ENCODE measurements at regions of chr6 and their contacts with region 1.

Region 1: DNA sequence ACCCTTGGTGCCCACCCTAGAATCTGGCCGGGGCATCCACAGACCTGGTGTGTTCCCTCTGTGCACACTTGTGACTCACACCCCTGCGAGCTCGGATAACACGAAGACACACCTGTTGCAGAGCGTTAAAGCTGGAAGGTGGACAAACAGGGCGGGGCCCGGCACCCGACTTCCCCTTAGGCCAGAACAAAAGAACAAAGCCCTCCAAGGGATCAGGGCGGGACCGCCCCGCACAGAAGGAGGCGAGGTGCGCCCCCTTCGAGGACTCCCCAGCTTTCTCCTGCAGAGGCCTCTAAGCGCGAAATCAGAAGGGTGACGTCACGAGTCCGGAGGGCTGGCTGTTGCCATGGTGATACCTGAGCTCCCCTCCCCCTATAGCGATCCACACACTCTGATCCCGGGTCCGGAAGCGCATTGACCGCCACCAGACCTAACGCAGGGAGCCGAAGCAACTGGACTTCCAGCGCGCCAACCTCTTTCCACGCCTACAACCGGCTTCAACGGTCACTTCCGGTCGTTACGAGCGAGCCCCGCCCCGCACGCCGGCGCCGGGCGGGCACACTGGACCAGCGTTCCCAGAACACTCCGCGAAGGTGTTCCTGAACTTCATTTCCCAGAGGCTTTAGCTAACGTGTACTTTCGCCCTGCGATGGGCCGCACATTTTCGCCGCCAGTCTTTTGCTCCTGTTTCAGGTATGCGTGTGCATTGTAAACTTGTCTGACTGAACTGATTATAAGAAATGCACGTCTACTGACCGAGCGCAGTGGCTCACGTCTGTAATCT is at the start of gene ZNF184:
- DNase-seq: peak; percentile 71 to 94 (median 84)
- ATAC-seq: peak; percentile 63
- H3K4me3 ChIP-seq: peak within 1 kb of the TSS; percentile 80 to 90
- H3K4me3 Mint-ChIP-seq: peak within 1 kb of the TSS; percentile 96
- H3K27ac ChIP-seq: peak within 1 kb of the TSS; percentile 94 to 96
- H3K27ac Mint-ChIP-seq: peak within 1 kb of the TSS; percentile 96
- H3K4me1 ChIP-seq: peaks cover 26% of the 10 kb centered on the region
- H3K4me1 Mint-ChIP-seq: peaks cover 48% of the 10 kb centered on the region
- H3K27me3 ChIP-seq: no peaks in the 10 kb centered on the region
- H3K27me3 Mint-ChIP-seq: no peaks in the 10 kb centered on the region
- CTCF ChIP-seq: no peak
- total RNA-seq, gene ZNF184: 31.8 to 32.9 TPM

Region 2: GRCh38 chr6:26568601-26569432 is 904.0 kb before region 1 on chr6:
- CTCF ChIA-PET with region 1: no interaction called
- POLR2A ChIA-PET with region 1: no interaction called
- intact Hi-C with region 1: loop called in 1 of 2 experiments (anchors 10 kb)
- DNase-seq: peak; percentile 95 to 100 (median 99)
- ATAC-seq: peak; percentile 73
- H3K4me3 ChIP-seq: peak overlapping the region; percentile 74 to 90
- H3K4me3 Mint-ChIP-seq: peak overlapping the region; percentile 92
- H3K27ac ChIP-seq: peak overlapping the region; percentile 79 to 80
- H3K27ac Mint-ChIP-seq: peak overlapping the region; percentile 97
- H3K4me1 ChIP-seq: peaks cover 15% of the 10 kb centered on the region
- H3K4me1 Mint-ChIP-seq: peaks cover 20% of the 10 kb centered on the region
- H3K27me3 ChIP-seq: no peaks in the 10 kb centered on the region
- H3K27me3 Mint-ChIP-seq: peaks cover 2% of the 10 kb centered on the region
- CTCF ChIP-seq: peak; percentile 34

Region 3: DNA sequence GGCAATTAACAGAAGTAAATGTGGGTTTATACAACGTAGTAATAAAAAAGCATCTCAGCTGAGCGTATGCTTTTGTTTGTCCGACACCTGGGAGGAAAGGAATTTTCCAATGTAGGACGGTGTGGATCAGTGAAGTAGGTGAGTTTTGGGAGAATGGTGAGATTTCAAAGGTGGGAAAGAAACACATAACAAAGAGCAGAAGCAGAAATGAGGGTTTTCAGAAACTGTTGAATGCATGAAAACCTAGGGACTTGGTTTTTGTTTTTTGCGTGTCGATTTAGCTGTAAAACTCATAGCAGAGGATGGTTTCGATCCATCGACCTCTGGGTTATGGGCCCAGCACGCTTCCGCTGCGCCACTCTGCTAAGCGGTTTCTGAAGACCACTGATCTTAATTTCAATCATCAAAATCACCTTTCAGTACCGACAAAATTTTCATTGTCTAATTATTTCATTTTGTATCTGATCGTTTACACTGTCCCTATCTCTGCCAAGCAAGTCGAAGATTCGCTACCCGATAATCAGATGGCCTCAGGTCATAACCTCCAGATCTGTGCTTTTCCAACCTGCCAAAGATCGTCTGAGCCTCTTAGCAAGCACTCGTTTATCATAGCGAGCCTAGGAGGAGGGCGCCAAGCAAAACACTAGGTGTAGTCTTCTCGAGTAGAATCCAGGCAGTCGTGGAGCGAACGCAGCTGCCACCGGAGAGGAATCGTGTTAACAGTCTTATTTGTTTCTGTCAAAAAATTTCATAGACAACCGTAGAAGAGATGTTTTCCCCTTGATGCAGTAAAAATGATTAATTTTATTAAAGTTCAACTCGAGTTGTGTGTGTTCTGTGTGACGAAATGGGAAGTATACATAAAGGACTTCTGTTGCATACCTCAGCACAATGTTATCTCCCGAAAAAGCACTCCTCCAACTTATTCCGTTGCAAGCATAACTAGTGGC is 139.8 kb before region 1 on chr6:
- CTCF ChIA-PET with region 1: no interaction called
- POLR2A ChIA-PET with region 1: no interaction called
- intact Hi-C with region 1: loop called (anchors 2 kb)
- DNase-seq: peak in 8 of 9 experiments; percentile 12 to 78 (median 60)
- ATAC-seq: peak; percentile 86
- H3K4me3 ChIP-seq: peak overlapping the region; percentile 53
- H3K4me3 Mint-ChIP-seq: peak overlapping the region; percentile 87
- H3K27ac ChIP-seq: no peak overlapping the region
- H3K27ac Mint-ChIP-seq: peak overlapping the region; percentile 82
- H3K4me1 ChIP-seq: no peaks in the 10 kb centered on the region
- H3K4me1 Mint-ChIP-seq: peaks cover 15% of the 10 kb centered on the region
- H3K27me3 ChIP-seq: peaks cover 0 to 4% of the 10 kb centered on the region in 2 experiments
- H3K27me3 Mint-ChIP-seq: peaks cover 21% of the 10 kb centered on the region
- CTCF ChIP-seq: no peak

Region 4: DNA sequence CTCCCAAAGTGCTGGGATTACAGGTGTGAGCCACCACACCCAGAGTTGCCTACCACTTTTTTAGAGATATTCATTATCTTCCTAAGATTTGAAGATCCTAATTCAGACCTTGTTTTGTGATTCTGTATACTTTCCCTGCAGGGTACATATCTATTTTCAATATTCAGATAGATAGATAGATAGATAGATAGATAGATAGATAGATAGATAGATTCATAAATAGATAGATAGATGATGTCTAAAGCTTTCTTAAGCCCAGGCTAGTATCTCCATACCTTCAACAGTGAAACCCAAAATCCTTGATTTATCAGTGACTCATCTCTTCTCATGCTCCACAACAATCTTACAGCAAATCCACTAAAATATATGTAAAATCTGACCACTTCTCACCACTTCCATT is 53.4 kb before region 1 on chr6:
- CTCF ChIA-PET with region 1: no interaction called
- POLR2A ChIA-PET with region 1: no interaction called
- intact Hi-C with region 1: no loop called
- DNase-seq: no peak
- ATAC-seq: no peak
- H3K4me3 ChIP-seq: no peak overlapping the region
- H3K4me3 Mint-ChIP-seq: no peak overlapping the region
- H3K27ac ChIP-seq: no peak overlapping the region
- H3K27ac Mint-ChIP-seq: no peak overlapping the region
- H3K4me1 ChIP-seq: no peaks in the 10 kb centered on the region
- H3K4me1 Mint-ChIP-seq: no peaks in the 10 kb centered on the region
- H3K27me3 ChIP-seq: no peaks in the 10 kb centered on the region
- H3K27me3 Mint-ChIP-seq: peaks cover 37% of the 10 kb centered on the region
- CTCF ChIP-seq: no peak

Region 5: DNA sequence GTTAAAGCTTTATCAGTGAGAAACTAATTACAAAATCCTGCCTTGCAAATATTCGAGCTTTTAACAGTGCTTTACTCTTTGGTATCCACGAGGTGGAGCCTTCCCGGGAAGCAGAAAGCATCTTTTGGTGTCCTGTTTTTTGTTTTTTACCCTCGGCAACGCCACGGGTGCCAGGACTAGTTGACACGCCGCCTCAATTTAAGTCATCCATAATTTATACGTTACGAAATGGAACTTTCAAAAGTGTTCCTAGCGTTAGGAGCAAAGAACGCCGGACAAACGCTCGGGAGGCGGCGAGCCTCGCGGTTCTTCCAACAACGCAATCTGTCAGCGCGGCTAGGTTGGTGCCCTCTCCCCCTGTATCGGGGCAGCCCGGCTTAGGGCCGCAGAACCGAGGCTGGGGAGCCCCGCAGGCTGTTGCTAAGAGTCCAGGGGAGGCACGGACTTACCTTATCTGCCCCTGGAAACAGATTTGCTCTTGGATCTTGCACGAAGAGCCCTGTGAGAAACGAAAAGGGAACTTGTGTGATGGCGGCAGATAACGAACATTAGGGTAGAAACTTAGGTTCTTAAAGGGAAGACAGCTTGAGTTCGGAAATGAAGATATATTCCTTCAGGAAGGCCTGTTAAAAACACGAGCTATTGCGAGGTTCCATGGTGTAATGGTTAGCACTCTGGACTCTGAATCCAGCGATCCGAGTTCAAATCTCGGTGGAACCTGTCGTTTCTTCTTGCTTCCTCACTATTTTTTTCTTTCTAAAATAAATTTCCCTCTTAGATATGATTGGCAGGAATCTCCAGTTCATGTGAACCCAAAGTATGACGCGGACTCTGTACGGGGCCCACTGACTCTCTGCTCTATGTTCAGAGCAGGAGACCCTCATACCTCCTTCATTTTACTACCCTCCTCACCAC is 46.3 kb after region 1 on chr6:
- CTCF ChIA-PET with region 1: no interaction called
- POLR2A ChIA-PET with region 1: no interaction called
- intact Hi-C with region 1: loop called (anchors 1 to 2 kb)
- DNase-seq: peak; percentile 29 to 88 (median 61)
- ATAC-seq: peak; percentile 78
- H3K4me3 ChIP-seq: peak overlapping the region; percentile 74 to 88
- H3K4me3 Mint-ChIP-seq: peak overlapping the region; percentile 83
- H3K27ac ChIP-seq: peak overlapping the region; percentile 59 to 72
- H3K27ac Mint-ChIP-seq: peak overlapping the region; percentile 83
- H3K4me1 ChIP-seq: peaks cover 10% of the 10 kb centered on the region
- H3K4me1 Mint-ChIP-seq: peaks cover 19% of the 10 kb centered on the region
- H3K27me3 ChIP-seq: peaks cover 0 to 9% of the 10 kb centered on the region in 2 experiments
- H3K27me3 Mint-ChIP-seq: peaks cover 18% of the 10 kb centered on the region
- CTCF ChIP-seq: peak; percentile 77

Region 6: DNA sequence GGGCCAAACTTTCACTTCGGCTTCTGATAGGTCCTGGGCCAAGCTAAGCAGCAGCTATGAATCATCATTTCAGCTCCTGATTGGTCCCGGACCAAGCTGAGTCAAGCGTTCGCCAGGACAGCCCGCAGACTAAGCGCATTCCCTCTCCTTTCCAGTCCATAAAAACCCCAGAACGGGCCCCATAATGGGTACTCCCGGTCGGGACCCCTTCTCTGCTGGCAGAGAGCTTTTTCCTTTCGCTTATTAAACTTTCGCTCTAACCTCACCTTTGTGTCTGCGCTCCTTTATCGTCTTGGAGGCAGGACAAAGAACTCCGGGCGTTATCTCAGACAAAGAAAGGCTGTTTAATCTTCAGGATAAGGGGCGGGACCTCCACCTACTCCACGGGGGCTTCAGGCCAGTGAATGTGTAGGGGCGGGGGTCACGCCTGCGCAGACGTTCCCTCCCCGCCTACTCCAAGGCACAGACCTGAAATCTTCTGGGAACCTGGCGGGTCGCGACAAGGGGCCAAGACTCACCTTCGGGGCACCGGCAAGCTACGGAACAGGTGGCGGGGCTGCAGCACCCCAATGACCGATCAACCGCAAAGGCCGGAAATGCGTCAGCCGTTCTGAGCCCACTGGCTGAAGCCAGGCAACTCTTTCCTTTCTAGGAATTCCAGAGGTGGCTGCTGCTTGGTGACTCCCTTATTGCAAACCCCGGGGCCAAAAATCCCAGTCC is 862.9 kb after region 1 on chr6 and contains the start of gene ZSCAN31:
- CTCF ChIA-PET with region 1: no interaction called
- POLR2A ChIA-PET with region 1: no interaction called
- intact Hi-C with region 1: loop called in 1 of 2 experiments (anchors 10 kb)
- DNase-seq: peak; percentile 64 to 94 (median 80)
- ATAC-seq: peak; percentile 86
- H3K4me3 ChIP-seq: peak within 1 kb of the TSS; percentile 77 to 85
- H3K4me3 Mint-ChIP-seq: no peak within 1 kb of the TSS
- H3K27ac ChIP-seq: peak within 1 kb of the TSS; percentile 94 to 96
- H3K27ac Mint-ChIP-seq: no peak within 1 kb of the TSS
- H3K4me1 ChIP-seq: peaks cover 15% of the 10 kb centered on the region
- H3K4me1 Mint-ChIP-seq: peaks cover 9% of the 10 kb centered on the region
- H3K27me3 ChIP-seq: no peaks in the 10 kb centered on the region
- H3K27me3 Mint-ChIP-seq: no peaks in the 10 kb centered on the region
- CTCF ChIP-seq: no peak
- total RNA-seq, gene ZSCAN31: 1.4 to 1.9 TPM

Region 7: DNA sequence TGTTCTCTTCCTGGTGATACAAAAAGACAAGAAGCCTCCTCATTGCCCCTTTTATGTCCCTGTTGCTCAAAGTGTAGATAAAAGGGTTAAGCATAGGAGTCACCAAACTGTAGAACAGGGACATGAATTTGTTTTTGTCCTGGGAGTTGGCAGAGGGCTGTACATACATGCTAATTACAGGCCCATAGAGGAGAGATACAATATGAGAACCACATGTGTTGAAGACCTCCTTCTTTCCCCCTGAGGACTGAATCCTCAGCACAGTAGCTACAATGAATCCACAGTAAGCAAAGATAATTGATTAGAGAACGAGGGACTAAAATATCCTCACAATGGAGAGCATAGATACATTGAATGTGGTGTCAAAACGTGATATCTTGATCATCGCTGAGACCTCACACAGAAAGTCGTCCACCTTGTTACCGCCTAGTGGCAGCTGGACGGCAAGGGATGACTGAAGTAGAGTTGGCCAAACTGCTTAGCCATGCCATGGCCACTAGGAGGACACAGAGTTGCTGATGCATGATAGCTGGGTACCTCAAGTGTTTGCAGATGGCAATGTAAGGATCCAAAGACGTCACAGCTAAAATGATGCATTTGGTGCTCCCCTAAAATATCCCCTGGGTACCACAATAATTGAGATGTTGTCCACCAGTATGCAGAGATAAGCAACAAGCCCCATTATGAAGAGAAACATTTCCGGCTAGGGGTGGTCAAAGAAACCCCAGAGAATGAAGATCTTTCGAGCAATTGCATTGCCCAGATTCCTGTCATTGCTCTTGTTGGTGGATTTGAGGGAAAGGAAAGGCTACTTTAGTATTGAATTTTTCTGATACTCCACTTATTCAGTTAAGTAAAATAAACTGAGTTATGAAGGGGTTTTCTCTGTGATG is 1599.3 kb after region 1 on chr6:
- CTCF ChIA-PET with region 1: no interaction called
- POLR2A ChIA-PET with region 1: no interaction called
- intact Hi-C with region 1: no loop called
- DNase-seq: peak in 2 of 9 experiments; percentile 7 to 8
- ATAC-seq: no peak
- H3K4me3 ChIP-seq: no peak overlapping the region
- H3K4me3 Mint-ChIP-seq: no peak overlapping the region
- H3K27ac ChIP-seq: no peak overlapping the region
- H3K27ac Mint-ChIP-seq: no peak overlapping the region
- H3K4me1 ChIP-seq: no peaks in the 10 kb centered on the region
- H3K4me1 Mint-ChIP-seq: no peaks in the 10 kb centered on the region
- H3K27me3 ChIP-seq: no peaks in the 10 kb centered on the region
- H3K27me3 Mint-ChIP-seq: peaks cover 48% of the 10 kb centered on the region
- CTCF ChIP-seq: no peak